ENCODE measurements at regions of chr4 and their contacts with region 1.

Region 1: GRCh38 chr4:4289941-4290850 is at the starts of genes LYAR and ZBTB49:
- DNase-seq: peak; percentile 94 to 98 (median 96)
- ATAC-seq: peak; percentile 92
- H3K4me3 ChIP-seq: peak within 1 kb of the TSS; percentile 87
- H3K4me3 Mint-ChIP-seq: peak within 1 kb of the TSS; percentile 98
- H3K27ac ChIP-seq: peak within 1 kb of the TSS; percentile 55 to 72
- H3K27ac Mint-ChIP-seq: peak within 1 kb of the TSS; percentile 92
- H3K4me1 ChIP-seq: peaks cover 49% of the 10 kb centered on the region
- H3K4me1 Mint-ChIP-seq: peaks cover 65% of the 10 kb centered on the region
- H3K27me3 ChIP-seq: no peaks in the 10 kb centered on the region
- H3K27me3 Mint-ChIP-seq: no peaks in the 10 kb centered on the region
- CTCF ChIP-seq: no peak
- total RNA-seq, gene LYAR: 13.8 to 13.9 TPM
- total RNA-seq, gene ZBTB49: 6.6 to 8.8 TPM

Region 2: GRCh38 chr4:4185528-4185927 is 104.7 kb before region 1 on chr4:
- CTCF ChIA-PET with region 1: no interaction called
- POLR2A ChIA-PET with region 1: no interaction called
- intact Hi-C with region 1: no loop called
- DNase-seq: no peak
- ATAC-seq: no peak
- H3K4me3 ChIP-seq: no peak overlapping the region
- H3K4me3 Mint-ChIP-seq: no peak overlapping the region
- H3K27ac ChIP-seq: no peak overlapping the region
- H3K27ac Mint-ChIP-seq: no peak overlapping the region
- H3K4me1 ChIP-seq: no peaks in the 10 kb centered on the region
- H3K4me1 Mint-ChIP-seq: no peaks in the 10 kb centered on the region
- H3K27me3 ChIP-seq: peaks cover 8 to 15% of the 10 kb centered on the region in 2 experiments
- H3K27me3 Mint-ChIP-seq: peaks cover 52% of the 10 kb centered on the region
- CTCF ChIP-seq: no peak

Region 3: DNA sequence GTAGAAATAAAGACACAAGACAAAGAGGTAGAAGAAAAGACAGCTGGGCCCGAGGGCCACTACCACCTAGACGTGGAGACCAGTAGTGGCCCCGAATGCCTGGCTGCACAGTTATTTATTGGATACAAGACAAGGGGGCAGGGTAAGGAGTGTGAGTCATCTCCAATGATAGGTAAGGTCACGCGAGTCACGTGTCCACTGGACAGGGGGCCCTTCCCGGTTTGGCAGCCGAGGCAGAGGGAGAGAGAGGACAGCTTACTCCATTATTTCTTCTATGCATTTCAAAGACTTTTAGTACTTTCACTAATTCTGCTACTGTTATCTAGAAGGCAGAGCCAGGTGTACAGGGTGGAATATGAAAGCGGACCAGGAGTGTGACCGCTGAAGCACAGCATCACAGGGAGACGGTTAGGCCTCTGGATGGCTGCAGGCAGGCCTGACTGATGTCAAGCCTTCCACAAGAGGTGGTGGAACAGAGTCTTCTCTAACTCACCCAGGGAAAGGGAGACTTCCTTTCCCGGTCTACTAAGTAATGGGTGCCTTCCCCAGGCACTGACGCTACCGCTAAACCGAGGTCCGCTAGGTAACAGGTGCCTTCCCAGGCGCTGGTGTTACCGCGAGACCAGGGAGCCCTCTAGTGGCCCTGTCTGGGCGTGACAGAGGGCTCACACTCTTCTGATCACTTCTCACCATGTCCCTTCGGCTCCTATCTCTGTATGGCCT is 44.8 kb after region 1 on chr4:
- CTCF ChIA-PET with region 1: no interaction called
- POLR2A ChIA-PET with region 1: no interaction called
- intact Hi-C with region 1: loop called in 1 of 2 experiments (anchors 5 kb)
- DNase-seq: peak; percentile 59 to 88 (median 69)
- ATAC-seq: peak; percentile 90
- H3K4me3 ChIP-seq: no peak overlapping the region
- H3K4me3 Mint-ChIP-seq: no peak overlapping the region
- H3K27ac ChIP-seq: no peak overlapping the region
- H3K27ac Mint-ChIP-seq: no peak overlapping the region
- H3K4me1 ChIP-seq: peaks cover 7% of the 10 kb centered on the region
- H3K4me1 Mint-ChIP-seq: peaks cover 14% of the 10 kb centered on the region
- H3K27me3 ChIP-seq: no peaks in the 10 kb centered on the region
- H3K27me3 Mint-ChIP-seq: no peaks in the 10 kb centered on the region
- CTCF ChIP-seq: peak; percentile 81

Region 4: DNA sequence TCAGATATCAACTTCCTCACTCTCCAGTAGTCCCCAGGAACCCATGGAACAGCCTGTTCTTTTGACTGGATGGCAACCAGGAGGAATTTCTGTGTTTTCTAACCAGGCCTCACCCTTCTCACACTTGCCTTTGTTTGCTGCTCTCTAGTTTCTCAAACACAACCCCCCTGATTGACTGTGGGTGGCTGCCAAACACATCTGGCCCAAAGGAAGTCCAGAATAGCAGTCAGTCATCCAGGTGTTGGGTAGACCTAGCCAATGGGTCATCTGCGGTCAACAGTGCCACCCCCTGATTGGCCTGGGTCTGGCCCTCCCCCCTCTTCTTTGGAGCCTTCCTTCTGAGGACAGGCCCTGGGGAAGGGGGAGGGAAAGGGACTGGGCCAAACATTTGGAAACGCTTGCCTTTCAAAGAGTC is 623.0 kb after region 1 on chr4:
- CTCF ChIA-PET with region 1: no interaction called
- POLR2A ChIA-PET with region 1: no interaction called
- intact Hi-C with region 1: no loop called
- DNase-seq: no peak
- ATAC-seq: no peak
- H3K4me3 ChIP-seq: no peak overlapping the region
- H3K4me3 Mint-ChIP-seq: no peak overlapping the region
- H3K27ac ChIP-seq: no peak overlapping the region
- H3K27ac Mint-ChIP-seq: no peak overlapping the region
- H3K4me1 ChIP-seq: no peaks in the 10 kb centered on the region
- H3K4me1 Mint-ChIP-seq: no peaks in the 10 kb centered on the region
- H3K27me3 ChIP-seq: peaks cover 0 to 2% of the 10 kb centered on the region in 2 experiments
- H3K27me3 Mint-ChIP-seq: peaks cover 33% of the 10 kb centered on the region
- CTCF ChIP-seq: no peak

Region 5: GRCh38 chr4:5371415-5372190 is 1081.4 kb after region 1 on chr4:
- CTCF ChIA-PET with region 1: no interaction called
- POLR2A ChIA-PET with region 1: no interaction called
- intact Hi-C with region 1: no loop called
- DNase-seq: no peak
- ATAC-seq: no peak
- H3K4me3 ChIP-seq: no peak overlapping the region
- H3K4me3 Mint-ChIP-seq: no peak overlapping the region
- H3K27ac ChIP-seq: no peak overlapping the region
- H3K27ac Mint-ChIP-seq: no peak overlapping the region
- H3K4me1 ChIP-seq: no peaks in the 10 kb centered on the region
- H3K4me1 Mint-ChIP-seq: no peaks in the 10 kb centered on the region
- H3K27me3 ChIP-seq: no peaks in the 10 kb centered on the region
- H3K27me3 Mint-ChIP-seq: no peaks in the 10 kb centered on the region
- CTCF ChIP-seq: no peak